ENCODE measurements at regions of chr20 and their contacts with region 1.

Region 1: GRCh38 chr20:62407221-62407992 is at the start of gene CABLES2:
- DNase-seq: peak; percentile 96
- H3K4me3 ChIP-seq: peak within 1 kb of the TSS; percentile 86
- H3K27ac ChIP-seq: peak within 1 kb of the TSS; percentile 69
- H3K4me1 ChIP-seq: peaks cover 42% of the 10 kb centered on the region
- CTCF ChIP-seq: peak; percentile 28; the same call in 1 of the 2 replicates
- total RNA-seq, gene CABLES2: 11.1 and 14.8 TPM in 2 replicates

Region 2: GRCh38 chr20:62065669-62066338 is 341.6 kb before region 1 on chr20 and contains the start of gene TAF4:
- CTCF ChIA-PET with region 1: no interaction called
- POLR2A ChIA-PET with region 1: no interaction called
- intact Hi-C with region 1: loop called (anchors 10 kb)
- DNase-seq: peak; percentile 88
- H3K4me3 ChIP-seq: peak within 1 kb of the TSS; percentile 75
- H3K27ac ChIP-seq: peak within 1 kb of the TSS; percentile 66
- H3K4me1 ChIP-seq: peaks cover 46% of the 10 kb centered on the region
- CTCF ChIP-seq: no peak
- total RNA-seq, gene TAF4: 6.7 and 11.2 TPM in 2 replicates

Region 3: GRCh38 chr20:62386383-62387218 is 20.8 kb before region 1 on chr20 and contains the start of gene RPS21:
- CTCF ChIA-PET with region 1: no interaction called
- POLR2A ChIA-PET with region 1: no interaction called
- intact Hi-C with region 1: loop called (anchors 2 kb)
- DNase-seq: peak; percentile 95
- H3K4me3 ChIP-seq: peak within 1 kb of the TSS; percentile 100
- H3K27ac ChIP-seq: peak within 1 kb of the TSS; percentile 72
- H3K4me1 ChIP-seq: peaks cover 45% of the 10 kb centered on the region
- CTCF ChIP-seq: no peak
- total RNA-seq, gene RPS21: 2,092 and 3,376 TPM in 2 replicates

Region 4: DNA sequence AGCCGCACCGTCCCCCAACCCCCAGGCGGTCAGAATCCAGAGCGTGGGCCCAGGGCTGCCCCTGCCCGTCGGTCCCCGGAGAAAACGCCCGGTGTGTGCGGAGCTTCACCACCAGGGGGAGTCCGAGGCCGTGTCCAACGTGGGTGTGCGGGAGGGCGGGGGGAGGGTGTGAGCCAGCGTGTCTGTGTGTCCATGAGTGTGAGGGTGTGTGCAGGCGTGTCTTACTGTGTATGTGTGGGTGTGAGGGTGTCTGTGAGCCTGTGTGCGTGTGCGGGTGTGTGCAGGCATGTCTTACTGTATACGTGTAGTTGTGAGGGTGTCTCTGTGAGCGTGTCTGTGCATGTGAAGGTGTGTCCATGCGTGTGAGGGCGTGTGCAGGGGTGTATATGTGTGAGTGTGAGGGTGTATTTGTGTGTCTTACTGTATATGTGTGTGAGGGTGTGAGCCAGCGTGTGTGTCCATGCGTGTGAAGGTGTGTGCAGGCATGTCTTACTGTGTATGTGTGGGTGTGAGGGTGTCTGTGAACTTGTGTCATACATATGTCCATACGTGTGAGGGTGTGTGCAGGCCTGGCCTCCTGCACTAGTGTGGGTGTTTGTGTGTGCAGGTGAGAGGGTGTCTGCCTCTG is 92.9 kb after region 1 on chr20:
- CTCF ChIA-PET with region 1: no interaction called
- POLR2A ChIA-PET with region 1: no interaction called
- intact Hi-C with region 1: loop called (anchors 1 kb)
- DNase-seq: peak; percentile 73
- H3K4me3 ChIP-seq: no peak overlapping the region
- H3K27ac ChIP-seq: no peak overlapping the region
- H3K4me1 ChIP-seq: peaks cover 18% of the 10 kb centered on the region
- CTCF ChIP-seq: peak; percentile 86

Region 5: GRCh38 chr20:62616728-62617621 is 209.6 kb after region 1 on chr20:
- CTCF ChIA-PET with region 1: no interaction called
- POLR2A ChIA-PET with region 1: no interaction called
- intact Hi-C with region 1: loop called (anchors 2 kb)
- DNase-seq: peak; percentile 82
- H3K4me3 ChIP-seq: no peak overlapping the region
- H3K27ac ChIP-seq: no peak overlapping the region
- H3K4me1 ChIP-seq: peaks cover 31% of the 10 kb centered on the region
- CTCF ChIP-seq: peak; percentile 98

Measured in OCI-LY7 (cell line).